ENCODE measurements at regions of chr6 and their contacts with region 1.

Region 1: GRCh38 chr6:44096612-44097011 is 30.6 kb downstream of the MRPL14 start:
- DNase-seq: peak; percentile 86
- H3K4me3 ChIP-seq: peak overlapping the region in 1 of 2 experiments; percentile 39; a peak in 1 of 4 replicates
- H3K27ac ChIP-seq: no peak overlapping the region
- H3K4me1 ChIP-seq: no peaks in the 10 kb centered on the region; a peak in 1 of 4 replicates
- H3K27me3 ChIP-seq: no peaks in the 10 kb centered on the region
- CTCF ChIP-seq: peak; percentile 78
- EP300 ChIP-seq: no peak
- RAD21 ChIP-seq: peak; percentile 95

Region 2: GRCh38 chr6:43838276-43839036 is 258.2 kb before region 1 on chr6:
- CTCF ChIA-PET with region 1: no interaction called
- POLR2A ChIA-PET with region 1: no interaction called
- DNase-seq: peak; percentile 62
- H3K4me3 ChIP-seq: no peak overlapping the region
- H3K27ac ChIP-seq: peak overlapping the region in 1 of 2 experiments; percentile 9; a peak in 1 of 4 replicates
- H3K4me1 ChIP-seq: peaks cover 3 to 27% of the 10 kb centered on the region in 2 experiments; a peak in 2 of 4 replicates
- H3K27me3 ChIP-seq: no peaks in the 10 kb centered on the region
- CTCF ChIP-seq: peak; percentile 60
- EP300 ChIP-seq: no peak
- RAD21 ChIP-seq: peak; percentile 60

Region 3: DNA sequence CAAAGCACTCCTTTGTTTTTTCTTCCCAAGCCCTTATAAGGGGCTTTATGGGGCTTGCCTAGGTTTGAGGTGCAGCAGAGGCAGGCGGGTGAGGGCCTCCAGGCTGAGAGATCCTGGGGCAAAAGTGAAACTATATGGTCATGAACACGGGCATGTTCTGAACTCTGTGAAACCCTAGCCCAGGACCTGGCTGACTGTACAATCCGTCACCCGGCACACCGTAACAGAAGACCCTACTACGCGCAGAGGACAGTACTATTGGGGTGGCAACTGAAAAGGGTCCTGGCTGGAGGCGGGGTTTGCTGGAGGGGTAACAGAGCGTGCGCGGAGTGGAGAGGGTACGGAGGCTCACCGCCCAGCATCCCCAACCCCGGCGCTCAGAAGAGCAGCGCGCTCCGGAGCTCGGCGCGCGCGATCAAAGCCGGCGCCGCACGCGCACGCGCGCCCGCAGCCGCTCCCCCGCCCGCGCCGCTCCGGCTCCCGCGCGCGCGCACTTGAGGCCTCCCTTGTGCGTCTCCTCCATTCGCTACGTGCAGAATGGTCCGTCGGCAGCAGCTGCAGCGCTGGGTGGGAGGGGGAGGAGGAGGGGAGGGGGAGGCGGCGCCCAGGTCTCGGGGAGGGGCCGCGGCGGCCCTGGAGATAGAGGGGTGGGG is 23.5 kb before region 1 on chr6:
- CTCF ChIA-PET with region 1: no interaction called
- POLR2A ChIA-PET with region 1: no interaction called
- DNase-seq: peak; percentile 95
- H3K4me3 ChIP-seq: peak overlapping the region in 1 of 2 experiments; percentile 37; a peak in 3 of 4 replicates
- H3K27ac ChIP-seq: peak overlapping the region; percentile 93 to 99
- H3K4me1 ChIP-seq: peaks cover 35 to 65% of the 10 kb centered on the region in 2 experiments
- H3K27me3 ChIP-seq: no peaks in the 10 kb centered on the region
- CTCF ChIP-seq: no peak
- EP300 ChIP-seq: no peak
- RAD21 ChIP-seq: no peak; the same call in 1 of the 2 replicates

Region 4: DNA sequence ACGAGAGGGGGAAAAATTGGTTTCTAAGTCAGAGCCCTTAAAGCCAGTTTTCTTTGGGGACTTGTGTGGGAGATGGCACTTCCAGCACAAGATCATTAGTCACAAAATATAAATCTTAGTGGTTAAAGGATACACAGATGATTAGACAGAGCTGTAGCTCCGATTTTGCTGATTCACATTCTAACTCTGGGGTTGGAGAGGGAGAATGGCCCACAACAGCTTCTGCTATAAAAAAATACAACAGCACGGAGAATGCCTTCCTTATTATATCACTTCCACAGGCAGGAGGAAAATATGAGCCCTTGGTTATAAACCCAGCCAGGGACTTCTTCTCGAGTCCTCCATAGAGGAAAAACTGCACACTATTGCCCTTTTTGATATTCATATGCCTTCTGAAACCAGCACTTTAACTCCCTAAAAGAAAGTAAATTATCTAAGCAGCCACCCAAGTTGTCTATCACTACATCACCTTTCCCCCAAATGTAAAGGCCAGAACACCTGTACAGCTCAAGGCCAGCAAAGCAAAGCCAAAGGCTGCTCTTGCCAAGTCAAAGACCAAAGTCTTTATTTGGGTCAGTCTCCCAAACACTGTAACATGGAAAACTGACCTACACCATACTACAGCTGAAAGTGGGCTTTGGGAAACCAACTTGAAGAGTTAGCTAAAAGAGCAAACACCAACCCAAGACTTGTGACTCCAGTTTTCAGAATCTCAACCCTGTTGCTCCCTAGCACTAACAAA is 20.2 kb after region 1 on chr6:
- CTCF ChIA-PET with region 1: interaction called, 103 read pairs
- POLR2A ChIA-PET with region 1: no interaction called
- DNase-seq: no peak
- H3K4me3 ChIP-seq: peak overlapping the region in 1 of 2 experiments; percentile 4; a peak in 1 of 4 replicates
- H3K27ac ChIP-seq: peak overlapping the region; percentile 61 to 77
- H3K4me1 ChIP-seq: peaks cover 20 to 33% of the 10 kb centered on the region in 2 experiments; a peak in 2 of 4 replicates
- H3K27me3 ChIP-seq: no peaks in the 10 kb centered on the region
- CTCF ChIP-seq: no peak
- EP300 ChIP-seq: no peak
- RAD21 ChIP-seq: no peak

Region 5: GRCh38 chr6:44133003-44133931 is 36.7 kb after region 1 on chr6:
- CTCF ChIA-PET with region 1: interaction called, 18 read pairs
- POLR2A ChIA-PET with region 1: interaction called, 3 read pairs
- DNase-seq: peak; percentile 94
- H3K4me3 ChIP-seq: no peak overlapping the region; a peak in 1 of 4 replicates
- H3K27ac ChIP-seq: peak overlapping the region in 1 of 2 experiments; percentile 54; a peak in 2 of 4 replicates
- H3K4me1 ChIP-seq: peaks cover 4 to 15% of the 10 kb centered on the region in 2 experiments; a peak in 1 of 4 replicates
- H3K27me3 ChIP-seq: no peaks in the 10 kb centered on the region
- CTCF ChIP-seq: no peak
- EP300 ChIP-seq: no peak; a peak in 1 of 4 replicates
- RAD21 ChIP-seq: no peak; the same call in 1 of the 2 replicates

Region 6: DNA sequence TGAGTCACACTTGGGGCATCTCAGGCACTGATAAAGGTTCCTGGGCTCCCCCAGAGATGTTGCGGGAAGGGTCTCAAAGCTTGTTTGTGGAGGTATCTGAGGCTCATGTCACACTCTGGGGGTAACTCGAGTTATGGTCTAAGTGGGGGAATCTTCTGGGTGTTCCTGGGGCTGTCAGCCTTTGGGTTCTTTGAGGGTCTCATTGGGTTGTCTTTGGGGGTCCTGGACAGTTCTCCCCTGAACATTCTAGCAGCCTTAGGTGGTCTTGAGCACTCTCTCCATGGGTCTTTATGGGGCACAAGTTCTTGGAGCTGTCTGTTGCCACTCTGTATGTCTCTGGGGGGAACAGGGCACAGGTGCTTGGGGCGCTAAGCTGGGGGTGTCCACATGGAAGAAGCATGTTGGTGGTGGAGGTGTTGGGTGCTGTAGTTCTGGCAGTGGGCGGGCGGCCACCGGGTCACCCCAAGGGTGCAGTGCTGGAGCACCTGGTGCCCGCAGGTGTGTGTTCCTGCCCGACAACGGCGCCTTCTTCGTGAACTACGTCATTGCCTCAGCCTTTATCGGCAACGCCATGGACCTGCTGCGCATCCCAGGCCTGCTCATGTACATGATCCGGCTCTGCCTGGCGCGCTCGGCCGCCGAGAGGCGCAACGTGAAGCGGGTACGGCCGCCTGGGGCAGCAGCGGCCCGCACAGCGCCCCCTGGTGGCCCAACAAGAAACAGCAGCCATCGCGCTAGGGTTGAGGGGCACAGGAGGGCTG is 54.9 kb after region 1 on chr6:
- CTCF ChIA-PET with region 1: interaction called, 158 read pairs
- POLR2A ChIA-PET with region 1: interaction called, 3 read pairs
- DNase-seq: peak; percentile 93
- H3K4me3 ChIP-seq: peak overlapping the region in 1 of 2 experiments; percentile 49; a peak in 1 of 4 replicates
- H3K27ac ChIP-seq: no peak overlapping the region
- H3K4me1 ChIP-seq: peaks cover 0 to 3% of the 10 kb centered on the region in 2 experiments; a peak in 1 of 4 replicates
- H3K27me3 ChIP-seq: no peaks in the 10 kb centered on the region
- CTCF ChIP-seq: peak; percentile 97
- EP300 ChIP-seq: no peak
- RAD21 ChIP-seq: peak; percentile 67

Region 7: DNA sequence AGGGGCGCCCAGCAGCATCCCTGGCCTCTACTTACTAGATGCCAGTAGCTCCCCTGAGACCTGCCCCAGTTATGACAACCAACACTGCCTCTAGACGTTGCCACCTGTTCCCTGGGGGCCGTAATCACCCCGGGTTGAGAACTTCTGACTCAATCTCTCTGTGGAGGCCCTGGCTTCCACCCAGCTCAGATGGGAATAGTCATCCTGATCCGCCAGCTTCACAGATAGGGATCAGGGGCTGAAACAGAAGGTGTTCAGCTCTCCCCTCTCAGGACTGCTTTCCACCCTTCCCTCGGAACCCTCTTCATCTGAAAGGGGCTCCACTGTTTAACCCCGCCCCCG is 65.4 kb after region 1 on chr6:
- CTCF ChIA-PET with region 1: interaction called, 158 read pairs
- POLR2A ChIA-PET with region 1: no interaction called
- DNase-seq: no peak
- H3K4me3 ChIP-seq: no peak overlapping the region
- H3K27ac ChIP-seq: no peak overlapping the region
- H3K4me1 ChIP-seq: peaks cover 0 to 3% of the 10 kb centered on the region in 2 experiments; a peak in 1 of 4 replicates
- H3K27me3 ChIP-seq: no peaks in the 10 kb centered on the region
- CTCF ChIP-seq: no peak
- EP300 ChIP-seq: no peak
- RAD21 ChIP-seq: no peak

Region 8: DNA sequence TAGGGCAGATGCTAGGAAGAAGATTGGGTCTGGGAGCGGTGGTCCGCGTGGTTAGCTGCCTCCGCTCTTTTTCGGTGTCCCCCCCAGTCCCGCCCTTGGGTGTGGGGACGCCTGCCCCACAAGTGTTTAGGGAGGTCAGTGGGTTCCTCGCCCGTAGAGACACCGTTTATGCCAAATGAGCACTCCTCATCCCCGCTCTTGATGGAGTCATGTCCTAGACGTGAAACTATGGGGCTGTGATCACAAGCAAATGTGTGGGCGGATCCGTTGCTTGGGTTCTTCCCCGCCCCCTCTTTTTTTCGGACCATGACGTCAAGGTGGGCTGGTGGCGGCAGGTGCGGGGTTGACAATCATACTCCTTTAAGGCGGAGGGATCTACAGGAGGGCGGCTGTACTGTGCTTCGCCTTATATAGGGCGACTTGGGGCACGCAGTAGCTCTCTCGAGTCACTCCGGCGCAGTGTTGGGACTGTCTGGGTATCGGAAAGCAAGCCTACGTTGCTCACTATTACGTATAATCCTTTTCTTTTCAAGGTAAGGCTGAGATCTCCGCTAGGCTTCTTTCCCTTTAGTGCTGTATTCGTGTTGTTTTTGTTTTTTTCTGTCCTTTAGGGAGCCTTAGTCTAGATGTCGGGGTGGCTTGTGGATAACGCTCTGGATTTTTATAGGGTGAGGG is 150.2 kb after region 1 on chr6 and contains the start of gene HSP90AB1:
- CTCF ChIA-PET with region 1: interaction called, 14 read pairs
- POLR2A ChIA-PET with region 1: interaction called, 10 read pairs
- DNase-seq: peak; percentile 94
- H3K4me3 ChIP-seq: peak within 1 kb of the TSS; percentile 65 to 99
- H3K27ac ChIP-seq: peak within 1 kb of the TSS; percentile 86
- H3K4me1 ChIP-seq: peaks cover 13 to 24% of the 10 kb centered on the region in 2 experiments; a peak in 3 of 4 replicates
- H3K27me3 ChIP-seq: no peaks in the 10 kb centered on the region
- CTCF ChIP-seq: no peak
- EP300 ChIP-seq: peak in 1 of 2 experiments; percentile 50; a peak in 1 of 4 replicates
- RAD21 ChIP-seq: no peak
- polyA plus RNA-seq, gene HSP90AB1: 843 and 1,069 TPM in 2 replicates

Region 9: DNA sequence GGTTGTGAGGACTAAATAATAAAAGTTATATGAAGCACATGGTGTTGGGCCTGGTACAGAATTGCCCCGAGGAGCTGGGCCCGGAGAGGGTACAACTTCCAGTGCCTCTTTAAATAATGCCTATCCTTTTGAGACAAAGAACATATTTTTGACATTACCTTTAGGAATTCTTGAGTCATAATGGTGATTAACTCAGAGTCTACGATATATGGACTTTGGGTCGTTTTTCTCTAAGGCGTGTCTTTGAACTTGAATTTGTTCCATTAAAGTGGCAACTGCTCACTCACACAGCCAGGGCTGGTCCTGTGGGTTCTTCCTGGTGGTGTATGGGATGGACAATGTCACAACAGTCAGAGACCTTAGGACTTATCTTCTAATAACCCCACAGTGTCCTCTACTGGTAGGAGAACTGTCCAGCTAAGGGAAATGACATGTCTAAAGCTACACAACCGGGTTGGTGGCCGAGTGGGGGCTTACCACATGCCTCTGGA is 397.4 kb after region 1 on chr6:
- CTCF ChIA-PET with region 1: no interaction called
- POLR2A ChIA-PET with region 1: no interaction called
- DNase-seq: no peak
- H3K4me3 ChIP-seq: no peak overlapping the region
- H3K27ac ChIP-seq: peak overlapping the region in 1 of 2 experiments; percentile 69; a peak in 2 of 4 replicates
- H3K4me1 ChIP-seq: peaks cover 0 to 18% of the 10 kb centered on the region in 2 experiments; a peak in 2 of 4 replicates
- H3K27me3 ChIP-seq: no peaks in the 10 kb centered on the region
- CTCF ChIP-seq: peak; percentile 44
- EP300 ChIP-seq: peak in 1 of 2 experiments; percentile 62; a peak in 1 of 4 replicates
- RAD21 ChIP-seq: 0 out of 2 replicates have a peak, but pooled peaks have one; percentile 30

Measured in SK-N-SH (cell line).